ENCODE measurements at regions of chr2 and their contacts with region 1.

Region 1: GRCh38 chr2:43408407-43409160 is 182.2 kb upstream of the ZFP36L2 start:
- H3K4me3 Mint-ChIP-seq: peak overlapping the region; percentile 4
- H3K27ac Mint-ChIP-seq: peak overlapping the region; percentile 79
- H3K4me1 Mint-ChIP-seq: peaks cover 44% of the 10 kb centered on the region
- H3K27me3 Mint-ChIP-seq: peaks cover 4% of the 10 kb centered on the region

Region 2: DNA sequence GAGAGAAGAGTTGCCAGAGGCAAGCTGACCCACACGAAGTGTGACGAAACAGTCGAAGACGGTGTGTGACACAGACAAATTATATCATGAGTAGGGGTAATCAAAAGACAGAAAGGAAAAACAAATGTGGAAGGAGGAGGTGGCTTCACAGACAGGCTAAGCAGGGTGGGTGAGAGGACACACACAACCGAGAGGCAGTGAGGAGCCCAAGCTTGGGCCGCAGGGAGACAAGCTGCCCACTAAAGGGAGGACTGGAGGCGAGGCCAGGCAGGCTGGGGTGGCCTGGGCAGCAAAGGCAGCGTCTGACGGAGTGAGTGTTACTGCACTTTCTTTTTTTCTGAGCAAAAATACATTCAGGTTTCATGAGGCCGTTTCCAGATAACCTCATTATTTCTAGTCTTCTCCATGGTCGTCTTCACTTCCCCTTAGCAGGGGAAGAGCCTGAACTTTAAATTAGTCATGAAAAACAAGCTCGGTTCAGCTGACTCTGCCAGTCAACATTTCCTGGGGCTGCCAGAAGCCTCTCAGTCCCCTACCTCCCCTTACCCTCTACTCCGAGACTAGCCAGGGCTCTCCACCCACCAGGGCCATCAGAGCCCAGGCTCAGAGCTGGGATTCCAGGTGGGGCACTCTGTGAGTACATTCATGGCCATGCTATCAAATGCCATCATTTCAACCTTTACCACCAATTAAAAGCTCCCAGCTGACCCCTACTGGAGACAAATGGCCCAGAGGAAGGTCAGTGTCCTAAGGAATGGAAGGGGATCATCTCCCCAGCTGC is 168.4 kb before region 1 on chr2:
- intact Hi-C with region 1: loop called (anchors 10 kb)
- H3K4me3 Mint-ChIP-seq: peak overlapping the region; percentile 18
- H3K27ac Mint-ChIP-seq: peak overlapping the region; percentile 94
- H3K4me1 Mint-ChIP-seq: peaks cover 71% of the 10 kb centered on the region
- H3K27me3 Mint-ChIP-seq: no peaks in the 10 kb centered on the region

Region 3: GRCh38 chr2:43305517-43305916 is 103.1 kb before region 1 on chr2:
- intact Hi-C with region 1: loop called (anchors 10 kb)
- H3K4me3 Mint-ChIP-seq: no peak overlapping the region
- H3K27ac Mint-ChIP-seq: peak overlapping the region; percentile 92
- H3K4me1 Mint-ChIP-seq: peaks cover 35% of the 10 kb centered on the region
- H3K27me3 Mint-ChIP-seq: no peaks in the 10 kb centered on the region

Region 4: DNA sequence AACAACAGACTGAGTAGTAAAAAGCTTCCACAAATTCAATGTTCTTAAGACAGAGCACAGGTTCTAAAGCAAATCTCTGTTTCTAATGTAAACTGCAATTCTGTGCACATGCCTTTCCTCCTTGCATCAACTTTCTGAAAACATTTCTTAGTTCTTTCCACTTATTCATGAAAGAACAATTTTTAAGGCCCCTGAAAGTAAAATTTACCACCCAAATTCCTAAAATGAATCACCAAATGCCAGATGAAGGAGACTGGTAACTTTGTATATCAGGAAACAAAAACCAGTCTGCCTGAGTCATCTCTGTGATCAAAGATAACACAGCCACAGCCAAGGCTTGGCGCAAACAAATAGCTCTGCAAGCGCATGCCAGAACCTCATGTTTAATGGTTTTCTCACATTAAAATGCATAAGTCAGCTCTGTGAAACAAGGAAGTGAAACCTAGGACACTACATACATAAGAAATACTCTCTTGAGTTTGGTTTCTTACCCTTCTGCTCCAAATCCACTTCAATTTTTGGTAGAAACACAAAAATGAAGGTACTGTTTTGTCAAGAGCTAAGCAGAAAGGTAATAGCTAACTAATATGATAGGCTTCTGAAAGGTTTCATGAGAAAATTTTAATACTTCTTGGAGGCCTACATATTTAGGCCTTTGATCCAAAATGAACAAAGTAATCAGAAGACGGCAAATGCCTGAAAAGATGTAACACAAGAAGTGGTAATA is 17.9 kb after region 1 on chr2:
- intact Hi-C with region 1: loop called (anchors 2 kb)
- H3K4me3 Mint-ChIP-seq: no peak overlapping the region
- H3K27ac Mint-ChIP-seq: peak overlapping the region; percentile 83
- H3K4me1 Mint-ChIP-seq: peaks cover 35% of the 10 kb centered on the region
- H3K27me3 Mint-ChIP-seq: no peaks in the 10 kb centered on the region

Region 5: DNA sequence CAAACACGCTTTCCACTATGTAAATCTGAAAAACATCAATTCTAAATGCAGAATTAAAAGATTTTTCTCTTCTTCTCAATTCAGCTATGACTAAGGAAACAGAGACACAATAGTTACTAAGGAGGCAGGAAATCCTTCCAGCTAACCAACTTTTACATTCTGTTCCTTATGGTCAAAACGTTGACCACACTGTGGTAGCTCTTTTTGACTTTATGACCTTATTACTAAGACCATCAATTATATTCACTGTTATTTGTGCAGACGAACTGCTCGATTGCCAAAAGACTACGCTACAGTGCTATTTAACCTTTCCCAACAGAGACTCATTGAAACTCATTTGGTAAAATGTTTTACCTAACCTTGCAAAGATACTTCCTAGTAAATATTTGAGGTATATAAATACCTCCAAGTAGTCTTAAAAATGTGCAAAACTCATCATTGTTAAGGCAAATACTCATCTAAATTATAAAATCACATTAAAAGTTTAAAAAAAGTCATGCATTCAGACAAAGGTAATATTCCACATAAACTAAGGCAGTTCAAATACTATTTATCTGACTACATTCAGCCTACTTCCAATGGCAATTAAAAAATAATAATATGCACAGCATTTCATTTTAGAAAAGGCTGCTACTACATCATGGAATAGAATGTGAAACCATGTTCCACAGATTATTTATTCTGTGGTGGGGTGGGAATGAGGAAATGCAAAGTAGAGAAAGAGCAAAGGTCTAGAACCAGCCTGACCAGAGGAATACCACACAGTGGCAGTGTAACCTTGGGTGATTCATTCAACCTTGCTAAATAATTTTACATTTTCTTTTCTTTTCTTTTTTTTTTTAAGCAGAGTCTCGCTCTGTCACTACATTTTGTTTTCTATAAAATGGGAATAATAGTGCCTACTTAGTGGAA is 47.4 kb after region 1 on chr2:
- intact Hi-C with region 1: loop called (anchors 5 kb)
- H3K4me3 Mint-ChIP-seq: no peak overlapping the region
- H3K27ac Mint-ChIP-seq: peak overlapping the region; percentile 35
- H3K4me1 Mint-ChIP-seq: peaks cover 63% of the 10 kb centered on the region
- H3K27me3 Mint-ChIP-seq: no peaks in the 10 kb centered on the region

Measured in dendritic cell treated with granulocyte-macrophage colony-stimulating factor and Interleukin-4, amounts not matched to agents 40 ng/mL and 50 ng/mL, for 4 days (primary cell).